ENCODE measurements at regions of chr14 and their contacts with region 1.

Region 1: GRCh38 chr14:58107947-58108552 is 44.0 kb downstream of the ARMH4 start:
- DNase-seq: peak; percentile 75
- H3K4me3 Mint-ChIP-seq: no peak overlapping the region
- H3K27ac Mint-ChIP-seq: no peak overlapping the region
- H3K4me1 Mint-ChIP-seq: peaks cover 3% of the 10 kb centered on the region
- H3K27me3 Mint-ChIP-seq: peaks cover 37% of the 10 kb centered on the region

Region 2: DNA sequence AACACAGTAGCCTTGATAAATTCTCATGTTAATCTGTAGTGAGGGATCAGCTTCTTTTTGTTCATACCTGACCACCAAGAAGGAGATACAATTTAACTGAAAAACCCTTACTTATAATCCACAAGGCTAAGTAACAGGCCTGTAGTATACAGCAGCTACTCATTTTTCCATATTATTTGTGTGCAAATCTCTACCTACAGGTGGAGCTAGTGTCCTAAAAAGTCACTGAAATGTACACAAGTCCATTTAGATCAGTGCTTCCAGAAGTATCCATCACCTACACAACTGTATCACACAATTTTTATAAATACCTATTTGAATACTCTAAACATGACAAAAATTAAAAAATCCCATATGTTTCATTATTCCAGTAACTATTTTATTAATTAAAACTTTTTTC is 415.4 kb before region 1 on chr14:
- intact Hi-C with region 1: no loop called
- DNase-seq: no peak
- H3K4me3 Mint-ChIP-seq: no peak overlapping the region
- H3K27ac Mint-ChIP-seq: no peak overlapping the region
- H3K4me1 Mint-ChIP-seq: no peaks in the 10 kb centered on the region
- H3K27me3 Mint-ChIP-seq: no peaks in the 10 kb centered on the region

Region 3: GRCh38 chr14:58082491-58083098 is 25.5 kb before region 1 on chr14:
- intact Hi-C with region 1: no loop called
- DNase-seq: no peak
- H3K4me3 Mint-ChIP-seq: no peak overlapping the region
- H3K27ac Mint-ChIP-seq: no peak overlapping the region
- H3K4me1 Mint-ChIP-seq: peaks cover 3% of the 10 kb centered on the region
- H3K27me3 Mint-ChIP-seq: peaks cover 17% of the 10 kb centered on the region

Region 4: DNA sequence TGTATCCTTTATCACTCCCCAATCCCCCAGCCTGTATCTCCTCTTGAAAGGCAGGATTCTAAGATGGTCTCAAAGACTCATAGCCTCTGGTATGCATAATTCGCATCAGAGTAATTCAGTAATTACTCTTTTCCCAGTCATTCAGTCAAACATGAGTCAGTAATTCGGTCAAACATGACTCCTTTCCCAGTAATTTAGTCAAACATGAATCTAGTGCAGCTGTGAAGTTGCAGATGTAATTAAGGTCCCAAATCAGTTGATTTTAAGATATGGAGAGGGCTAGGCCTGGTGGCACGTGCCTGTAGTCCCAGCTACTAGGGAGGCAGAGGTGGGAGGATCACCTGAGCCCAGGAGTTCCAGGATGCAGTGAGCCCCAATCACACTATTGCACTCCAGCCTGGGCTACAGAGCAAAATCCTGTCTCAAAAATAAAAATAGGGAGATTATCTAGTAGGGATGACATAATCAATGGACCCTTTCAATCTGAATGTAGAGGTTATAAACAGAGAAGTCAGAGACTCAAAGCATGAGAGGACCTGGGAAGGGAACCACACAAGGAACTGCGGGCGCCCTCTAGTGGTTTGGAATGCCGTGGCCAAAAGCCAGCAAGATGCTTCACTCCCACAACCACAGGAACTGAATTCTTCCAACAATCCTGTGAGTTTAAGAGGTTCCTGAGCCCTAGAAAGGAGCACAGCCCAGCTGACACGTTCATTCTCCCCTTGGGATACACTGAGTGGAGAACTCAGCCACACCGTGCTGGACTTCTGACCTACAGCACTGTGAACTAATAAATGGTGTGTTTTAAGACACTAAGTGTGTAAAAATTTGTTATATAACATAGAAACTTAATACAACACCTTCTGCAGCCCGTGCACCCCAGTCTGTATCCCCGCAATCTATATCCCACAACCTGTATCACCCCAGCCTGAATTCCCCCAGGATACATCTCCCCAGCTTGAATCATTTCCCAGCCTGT is 58.2 kb after region 1 on chr14:
- intact Hi-C with region 1: loop called (anchors 1 kb)
- DNase-seq: peak; percentile 90
- H3K4me3 Mint-ChIP-seq: no peak overlapping the region
- H3K27ac Mint-ChIP-seq: no peak overlapping the region
- H3K4me1 Mint-ChIP-seq: peaks cover 2% of the 10 kb centered on the region
- H3K27me3 Mint-ChIP-seq: peaks cover 13% of the 10 kb centered on the region

Region 5: DNA sequence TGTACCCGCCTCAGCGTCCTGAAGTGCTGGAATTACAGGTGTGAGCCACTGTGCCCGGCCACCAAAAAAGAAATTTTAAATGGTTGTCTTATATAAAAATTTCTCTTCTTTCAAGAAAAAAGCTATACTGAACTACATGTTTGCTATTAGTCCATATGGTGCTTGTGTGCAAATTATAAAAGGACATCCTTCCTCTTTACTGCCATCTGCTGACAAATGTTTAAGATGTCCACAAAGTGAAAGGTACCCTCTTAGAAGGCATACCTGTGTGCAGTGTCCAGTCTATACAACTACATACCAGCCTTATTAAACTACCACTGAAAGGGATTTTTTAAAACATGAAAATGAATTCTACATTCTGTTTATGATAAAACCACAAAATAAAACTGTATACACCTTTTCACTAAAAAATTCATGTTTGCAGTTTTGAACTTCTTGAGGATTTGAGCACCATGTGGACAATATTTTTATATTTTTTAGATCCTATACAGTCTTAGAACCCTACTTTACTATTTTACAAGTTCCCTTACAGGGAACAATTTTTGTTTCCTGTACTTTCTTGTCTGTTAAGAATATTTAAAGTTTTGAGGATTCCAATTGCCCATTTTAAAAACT is 254.9 kb after region 1 on chr14:
- intact Hi-C with region 1: loop called (anchors 1 kb)
- DNase-seq: peak; percentile 59
- H3K4me3 Mint-ChIP-seq: no peak overlapping the region
- H3K27ac Mint-ChIP-seq: no peak overlapping the region
- H3K4me1 Mint-ChIP-seq: peaks cover 6% of the 10 kb centered on the region
- H3K27me3 Mint-ChIP-seq: no peaks in the 10 kb centered on the region

Region 6: GRCh38 chr14:58395812-58396788 is 288.1 kb after region 1 on chr14 and contains the start of gene TOMM20L:
- intact Hi-C with region 1: loop called (anchors 1 kb)
- DNase-seq: peak; percentile 94
- H3K4me3 Mint-ChIP-seq: peak within 1 kb of the TSS; percentile 76
- H3K27ac Mint-ChIP-seq: peak within 1 kb of the TSS; percentile 51
- H3K4me1 Mint-ChIP-seq: peaks cover 11% of the 10 kb centered on the region
- H3K27me3 Mint-ChIP-seq: peaks cover 2% of the 10 kb centered on the region
- total RNA-seq, gene TOMM20L: not detected in 2 replicates